ENCODE measurements at regions of chr12 and their contacts with region 1.

Region 1: DNA sequence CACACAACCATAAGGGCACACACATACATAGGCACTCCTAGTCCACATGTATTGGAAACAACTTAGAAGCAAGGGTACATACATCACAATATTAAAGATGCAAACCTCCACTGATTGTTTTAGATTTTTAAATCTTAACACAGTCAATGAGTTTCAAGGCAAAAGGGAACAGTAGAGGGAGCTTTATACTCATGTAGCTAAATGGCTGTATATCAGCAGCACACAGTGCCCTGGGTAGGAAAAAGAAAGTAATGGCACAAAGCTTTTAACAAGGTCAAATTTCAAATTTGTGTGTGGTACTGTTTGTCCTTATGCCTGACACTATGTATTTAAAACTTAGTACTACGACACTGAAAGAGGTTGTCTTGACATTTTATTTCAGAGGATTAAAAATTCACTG is 262.0 kb downstream of the MED13L start:
- ATAC-seq: peak in 6 of 8 experiments; percentile 33 to 89 (median 77)
- H3K4me3 ChIP-seq: no peak overlapping the region
- H3K27ac ChIP-seq: no peak overlapping the region
- H3K4me1 ChIP-seq: no peaks in the 10 kb centered on the region

Region 2: DNA sequence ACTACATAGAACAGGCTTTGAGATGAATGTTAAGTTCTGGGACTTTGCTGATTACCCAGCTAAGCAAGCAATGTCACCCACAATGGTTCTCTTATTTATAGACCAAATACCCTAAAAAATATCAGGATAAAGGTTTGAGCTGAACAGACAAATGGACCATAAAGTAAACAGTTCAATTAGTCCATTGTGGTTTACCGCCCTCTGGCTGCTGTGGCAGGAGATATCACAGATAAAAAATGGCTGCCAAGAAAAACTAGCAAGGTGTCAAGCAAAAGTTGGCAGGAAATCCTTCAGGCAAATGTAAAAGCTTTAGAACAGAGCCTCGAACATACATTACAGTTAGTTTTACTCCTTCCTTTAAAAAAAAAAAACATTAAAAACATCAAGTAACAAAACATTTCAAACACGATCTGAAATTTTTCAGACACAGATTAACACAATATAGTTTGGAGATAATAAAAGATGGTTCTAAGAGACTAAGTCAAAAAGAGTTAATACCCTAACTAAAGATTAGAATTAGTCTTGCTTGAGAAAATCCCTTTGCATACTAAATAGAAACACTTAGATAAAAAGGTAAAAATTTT is 220.7 kb after region 1 on chr12:
- in situ Hi-C with region 1: loop called in 3 of 9 experiments (anchors 25 kb)
- ATAC-seq: peak in 5 of 8 experiments; percentile 34 to 57 (median 43)
- H3K4me3 ChIP-seq: no peak overlapping the region
- H3K27ac ChIP-seq: peak overlapping the region in 1 of 2 donors; percentile 10
- H3K4me1 ChIP-seq: peaks cover 0 to 15% of the 10 kb centered on the region in 2 donors

Region 3: GRCh38 chr12:116559162-116559935 is 543.8 kb after region 1 on chr12 and contains the start of gene MAP1LC3B2:
- in situ Hi-C with region 1: no loop called
- ATAC-seq: peak; percentile 75 to 99 (median 86)
- H3K4me3 ChIP-seq: no peak within 1 kb of the TSS
- H3K27ac ChIP-seq: peak within 1 kb of the TSS in 1 of 2 donors; percentile 64
- H3K4me1 ChIP-seq: peaks cover 11 to 15% of the 10 kb centered on the region in 2 donors
- total RNA-seq, gene MAP1LC3B2: 0.61 to 3.8 (median 1.1) TPM